Activated CD4-positive, alpha-beta memory T cell treated with anti-CD3 and anti-CD28 coated beads for 36 hours (primary cell): ENCODE measurements at regions of chr14 and their contacts with region 1.

Region 1: DNA sequence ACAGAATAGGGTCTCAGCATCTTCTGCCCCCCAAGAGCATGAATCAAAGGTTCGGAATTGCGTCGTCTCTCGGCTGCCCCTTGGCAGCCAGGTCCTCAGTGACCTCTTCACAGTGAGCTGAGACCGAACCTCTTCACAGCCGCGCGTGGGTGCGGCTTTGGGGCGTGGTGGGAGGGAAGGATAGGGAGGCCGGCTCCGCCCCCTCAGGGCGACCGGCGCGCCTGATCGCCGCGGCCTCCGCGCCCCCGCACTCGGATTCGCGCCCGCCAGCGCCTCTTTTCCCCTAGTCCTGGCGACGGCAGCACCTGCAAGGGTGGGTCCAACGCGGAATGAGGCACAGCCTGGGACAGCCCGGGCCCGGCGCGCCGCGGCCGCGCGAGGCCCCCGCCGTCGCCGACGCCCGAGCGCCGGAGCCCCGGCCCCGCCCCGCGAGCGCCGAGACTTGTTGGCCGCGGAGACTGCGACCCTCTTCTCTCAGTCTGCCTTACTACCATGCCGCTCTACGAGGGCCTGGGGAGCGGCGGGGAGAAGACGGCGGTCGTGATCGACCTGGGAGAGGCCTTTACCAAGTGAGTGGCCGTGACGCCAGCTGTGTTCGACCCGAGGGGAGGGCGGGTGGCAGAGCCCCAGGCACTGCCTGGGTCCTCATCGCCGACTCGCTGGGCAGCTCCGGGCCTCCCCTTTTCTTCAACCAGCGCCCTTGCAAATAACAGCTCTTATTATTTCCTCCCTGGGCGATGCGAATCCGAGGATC is at the start of gene ACTR10:
- DNase-seq: peak; percentile 93
- H3K4me3 Mint-ChIP-seq: peak within 1 kb of the TSS; percentile 95
- H3K27ac Mint-ChIP-seq: peak within 1 kb of the TSS; percentile 88
- H3K4me1 Mint-ChIP-seq: peaks cover 29% of the 10 kb centered on the region
- H3K27me3 Mint-ChIP-seq: no peaks in the 10 kb centered on the region
- total RNA-seq, gene ACTR10: 45.3 to 47.0 TPM

Region 2: DNA sequence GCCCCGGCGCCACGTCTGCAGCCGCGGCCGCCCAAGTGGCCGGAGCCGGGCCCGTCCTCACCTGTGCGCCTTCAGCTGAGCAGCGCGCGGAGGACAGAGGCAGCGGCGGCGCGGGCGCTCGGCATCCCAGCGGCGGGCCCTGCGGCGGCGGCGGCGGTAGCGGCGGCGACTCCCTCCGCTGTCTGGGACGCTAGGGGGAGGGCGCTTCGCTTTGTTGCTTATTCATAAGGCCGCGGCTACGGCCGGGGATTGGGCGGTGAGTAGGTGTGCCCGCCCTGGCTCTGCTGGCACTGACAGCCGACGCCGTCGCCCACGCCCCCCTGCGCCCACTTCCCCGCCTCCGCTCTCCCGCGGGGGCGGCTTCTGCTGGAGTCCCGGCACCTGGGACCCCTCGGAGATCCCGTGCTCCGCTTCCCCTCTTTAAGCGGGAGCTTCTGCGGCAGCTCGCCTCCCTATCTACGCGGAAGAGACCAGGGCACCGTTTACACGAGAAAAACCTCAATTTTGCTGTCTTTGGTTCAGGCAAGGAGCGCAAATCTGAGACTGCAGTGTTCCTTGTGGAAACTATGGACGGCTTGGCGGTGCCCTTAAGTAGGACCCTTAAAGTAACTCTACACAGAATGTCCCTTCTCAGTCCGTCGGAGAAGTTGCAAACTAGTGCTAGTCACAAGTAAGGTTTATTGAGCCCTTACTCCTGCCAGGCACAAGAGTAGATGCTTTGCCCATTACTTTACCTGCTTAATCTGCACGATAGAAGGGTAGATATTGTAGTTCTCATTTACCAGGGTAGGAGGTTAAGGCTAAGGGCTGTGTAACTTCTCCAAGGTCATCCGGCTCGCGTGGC is 47.7 kb before region 1 on chr14 and contains the start of gene ARMH4:
- CTCF ChIA-PET with region 1: no interaction called
- POLR2A ChIA-PET with region 1: no interaction called
- intact Hi-C with region 1: loop called (anchors 5 kb)
- DNase-seq: peak; percentile 77
- H3K4me3 Mint-ChIP-seq: peak within 1 kb of the TSS; percentile 71
- H3K27ac Mint-ChIP-seq: no peak within 1 kb of the TSS
- H3K4me1 Mint-ChIP-seq: peaks cover 16% of the 10 kb centered on the region
- H3K27me3 Mint-ChIP-seq: peaks cover 52% of the 10 kb centered on the region
- total RNA-seq, gene ARMH4: 0.29 TPM in 1 of 2 experiments, not detected in the other

Region 3: GRCh38 chr14:58166005-58166983 is 33.6 kb before region 1 on chr14:
- CTCF ChIA-PET with region 1: interaction called, 3 read pairs
- POLR2A ChIA-PET with region 1: no interaction called
- intact Hi-C with region 1: loop called (anchors 1 kb)
- DNase-seq: peak; percentile 84
- H3K4me3 Mint-ChIP-seq: no peak overlapping the region
- H3K27ac Mint-ChIP-seq: no peak overlapping the region
- H3K4me1 Mint-ChIP-seq: peaks cover 15% of the 10 kb centered on the region
- H3K27me3 Mint-ChIP-seq: peaks cover 8% of the 10 kb centered on the region

Region 4: GRCh38 chr14:58213176-58213575 is 13.3 kb after region 1 on chr14:
- CTCF ChIA-PET with region 1: no interaction called
- POLR2A ChIA-PET with region 1: no interaction called
- intact Hi-C with region 1: no loop called
- DNase-seq: no peak
- H3K4me3 Mint-ChIP-seq: no peak overlapping the region
- H3K27ac Mint-ChIP-seq: no peak overlapping the region
- H3K4me1 Mint-ChIP-seq: peaks cover 6% of the 10 kb centered on the region
- H3K27me3 Mint-ChIP-seq: no peaks in the 10 kb centered on the region

Region 5: GRCh38 chr14:58227096-58227819 is 27.4 kb after region 1 on chr14:
- CTCF ChIA-PET with region 1: no interaction called
- POLR2A ChIA-PET with region 1: no interaction called
- intact Hi-C with region 1: no loop called
- DNase-seq: no peak
- H3K4me3 Mint-ChIP-seq: no peak overlapping the region
- H3K27ac Mint-ChIP-seq: no peak overlapping the region
- H3K4me1 Mint-ChIP-seq: no peaks in the 10 kb centered on the region
- H3K27me3 Mint-ChIP-seq: no peaks in the 10 kb centered on the region

Region 6: DNA sequence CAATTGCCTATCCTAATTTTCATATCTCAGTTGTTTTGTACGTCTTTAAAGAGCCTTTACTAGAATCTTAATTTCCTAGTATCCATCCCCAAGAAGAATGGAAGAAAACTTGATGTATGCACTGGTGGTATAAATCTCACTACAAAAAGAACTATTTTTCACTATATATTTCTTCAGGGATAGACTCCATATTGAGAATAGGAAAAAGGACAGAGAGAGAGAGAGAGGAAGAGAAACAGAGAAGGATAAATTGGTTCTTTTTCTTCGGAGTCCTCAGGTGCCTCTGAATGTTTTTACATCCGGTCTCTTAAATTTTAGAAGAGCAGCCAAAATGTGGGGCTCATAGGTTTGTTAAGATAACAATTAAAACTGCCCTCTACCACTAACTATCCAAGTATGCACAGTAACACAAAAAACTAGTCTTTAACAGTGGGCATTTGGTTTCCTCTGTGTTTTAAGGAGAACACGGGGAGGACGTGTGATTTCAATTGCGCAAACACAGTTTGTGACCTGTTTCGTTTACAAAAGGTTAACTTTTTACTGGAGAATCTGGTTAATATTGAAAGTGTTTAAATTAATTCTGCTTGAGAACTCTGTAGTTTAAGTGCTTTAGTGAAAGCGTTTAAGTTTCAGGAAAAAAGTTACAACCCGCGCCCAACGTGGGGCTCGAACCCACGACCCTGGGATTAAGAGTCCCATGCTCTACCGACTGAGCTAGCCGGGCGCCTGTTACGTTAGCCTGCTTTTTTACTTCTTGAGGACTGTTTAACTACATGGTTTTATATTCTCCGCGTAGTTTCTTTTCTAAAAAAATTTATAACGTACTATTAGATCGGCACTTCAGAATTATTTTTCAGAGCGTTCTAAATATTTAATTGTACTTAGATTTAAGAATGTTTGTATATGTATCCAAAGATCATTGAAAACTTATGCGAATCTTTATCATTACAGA is 39.6 kb after region 1 on chr14:
- CTCF ChIA-PET with region 1: interaction called, 3 read pairs
- POLR2A ChIA-PET with region 1: interaction called, 9 read pairs
- intact Hi-C with region 1: loop called (anchors 1 kb)
- DNase-seq: peak; percentile 84
- H3K4me3 Mint-ChIP-seq: no peak overlapping the region
- H3K27ac Mint-ChIP-seq: no peak overlapping the region
- H3K4me1 Mint-ChIP-seq: peaks cover 23% of the 10 kb centered on the region
- H3K27me3 Mint-ChIP-seq: no peaks in the 10 kb centered on the region

Region 7: GRCh38 chr14:58258156-58258555 is 58.3 kb after region 1 on chr14:
- CTCF ChIA-PET with region 1: no interaction called
- POLR2A ChIA-PET with region 1: no interaction called
- intact Hi-C with region 1: no loop called
- DNase-seq: no peak
- H3K4me3 Mint-ChIP-seq: no peak overlapping the region
- H3K27ac Mint-ChIP-seq: peak overlapping the region; percentile 23
- H3K4me1 Mint-ChIP-seq: peaks cover 5% of the 10 kb centered on the region
- H3K27me3 Mint-ChIP-seq: no peaks in the 10 kb centered on the region

Region 8: DNA sequence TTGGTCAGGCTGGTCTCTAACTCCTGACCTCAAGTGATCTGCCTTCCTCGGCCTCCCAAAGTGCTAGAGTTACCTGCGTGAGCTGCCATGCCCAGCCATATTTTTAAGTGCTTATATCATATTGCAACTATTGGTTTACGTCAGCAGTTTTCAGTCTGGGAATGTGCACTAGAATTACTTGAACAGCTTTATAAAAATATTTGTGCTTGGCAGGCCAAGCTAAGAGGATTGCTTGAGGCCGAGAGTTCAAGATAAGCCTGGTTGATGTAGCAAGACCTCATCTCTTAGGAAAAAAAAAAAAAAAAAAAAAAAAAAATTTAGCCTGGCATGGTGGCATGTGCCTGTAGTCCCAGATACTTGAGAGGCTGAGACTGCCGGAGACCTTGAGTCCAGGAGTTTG is 244.7 kb after region 1 on chr14:
- CTCF ChIA-PET with region 1: no interaction called
- POLR2A ChIA-PET with region 1: no interaction called
- intact Hi-C with region 1: no loop called
- DNase-seq: no peak
- H3K4me3 Mint-ChIP-seq: no peak overlapping the region
- H3K27ac Mint-ChIP-seq: no peak overlapping the region
- H3K4me1 Mint-ChIP-seq: no peaks in the 10 kb centered on the region
- H3K27me3 Mint-ChIP-seq: no peaks in the 10 kb centered on the region